Ovary (tissue), 10 donors: ENCODE measurements at regions of chr4 and their contacts with region 1.

Region 1: DNA sequence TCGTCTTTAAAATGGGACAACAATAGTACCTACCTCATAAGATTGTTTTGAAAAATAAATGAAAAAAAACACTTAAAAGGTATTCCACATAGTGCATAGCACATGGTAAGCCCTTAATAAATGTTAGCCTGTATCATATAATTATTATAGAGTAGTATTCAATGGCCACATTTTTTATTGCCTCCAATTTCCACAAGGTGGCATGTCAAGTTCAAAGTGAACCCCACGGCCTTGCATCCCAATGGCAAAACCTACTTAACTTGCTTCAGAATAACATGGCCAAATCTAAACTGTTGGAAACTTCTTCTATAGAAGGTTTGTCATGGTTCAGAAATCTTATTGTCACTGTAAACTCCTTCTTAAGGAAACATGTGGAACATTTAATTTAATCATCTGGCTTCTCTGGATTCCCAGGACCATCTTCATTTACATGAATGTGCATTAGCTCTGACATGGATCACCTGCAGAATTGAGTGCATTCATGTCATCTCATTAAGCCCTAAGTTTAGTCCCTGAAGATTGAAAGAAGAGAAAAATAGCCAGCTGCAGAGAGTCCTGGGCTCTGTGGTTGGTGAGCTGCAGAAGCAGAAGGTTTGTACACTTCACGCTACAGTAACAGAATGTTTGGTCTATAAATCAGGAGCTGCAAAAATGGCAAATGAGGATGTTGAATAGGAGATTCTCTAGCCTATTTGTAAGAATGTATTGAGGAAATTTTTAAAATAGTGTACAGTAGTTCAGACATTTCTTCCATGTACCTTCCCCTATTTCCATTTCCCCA is 61.0 kb downstream of the ANXA3 start:
- DNase-seq: no peak
- H3K4me3 ChIP-seq: no peak overlapping the region
- H3K27ac ChIP-seq: no peak overlapping the region
- H3K4me1 ChIP-seq: no peaks in the 10 kb centered on the region
- H3K27me3 ChIP-seq: no peaks in the 10 kb centered on the region
- CTCF ChIP-seq: peak in 2 of 3 donors; percentile 8 to 24
- EP300 ChIP-seq: no peak
- POLR2A ChIP-seq: no peak

Region 2: DNA sequence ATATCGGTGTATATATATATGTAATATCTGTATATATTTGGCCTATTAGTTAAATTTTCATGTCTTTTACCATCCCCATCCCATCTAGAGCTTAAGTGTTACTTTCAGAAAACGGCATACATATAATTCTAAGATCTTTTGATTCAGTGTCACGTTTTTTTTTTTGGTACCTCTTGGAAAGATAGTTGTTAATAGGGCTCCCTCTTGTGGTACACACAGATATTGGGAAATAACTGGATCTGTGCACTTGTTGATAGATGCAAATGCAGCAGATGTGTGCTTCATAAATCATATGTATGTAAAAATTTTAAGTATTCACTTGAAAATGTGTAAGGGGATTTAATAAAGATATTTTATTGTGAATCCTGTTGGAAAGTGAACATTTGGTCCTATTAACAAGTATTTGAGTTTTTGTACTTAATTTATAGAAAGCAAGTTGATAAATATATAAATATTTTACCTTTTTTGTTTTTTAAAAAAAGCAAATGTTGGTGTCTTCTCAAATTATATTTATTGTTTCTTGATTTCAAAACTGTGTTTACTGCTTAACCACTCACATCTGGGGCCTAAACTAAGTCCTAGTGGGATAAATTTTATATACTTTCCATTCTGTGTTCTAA is 251.9 kb after region 1 on chr4:
- intact Hi-C with region 1: loop called in 3 of 4 experiments (anchors 10 kb)
- DNase-seq: no peak
- H3K4me3 ChIP-seq: no peak overlapping the region
- H3K27ac ChIP-seq: no peak overlapping the region
- H3K4me1 ChIP-seq: no peaks in the 10 kb centered on the region
- H3K27me3 ChIP-seq: no peaks in the 10 kb centered on the region
- CTCF ChIP-seq: peak in 2 of 3 donors; percentile 63 to 67
- EP300 ChIP-seq: no peak
- POLR2A ChIP-seq: no peak